ENCODE measurements at regions of chr9 and their contacts with region 1.

Region 1: GRCh38 chr9:113876151-113876992 is at the start of gene ZNF618:
- DNase-seq: peak; percentile 29 to 33
- ATAC-seq: peak; percentile 70 to 88 (median 87)
- H3K4me3 ChIP-seq: peak within 1 kb of the TSS; percentile 90
- H3K4me3 Mint-ChIP-seq: peak within 1 kb of the TSS; percentile 99
- H3K27ac ChIP-seq: no peak within 1 kb of the TSS
- H3K27ac Mint-ChIP-seq: peak within 1 kb of the TSS; percentile 73 to 87
- H3K4me1 ChIP-seq: peaks cover 3% of the 10 kb centered on the region
- H3K4me1 Mint-ChIP-seq: peaks cover 13% of the 10 kb centered on the region in 2 donors
- H3K27me3 ChIP-seq: peaks cover 2% of the 10 kb centered on the region
- H3K27me3 Mint-ChIP-seq: peaks cover 0 to under 1% of the 10 kb centered on the region in 2 donors
- CTCF ChIP-seq: no peak
- total RNA-seq, gene ZNF618: 9.2 to 10.7 (median 10.0) TPM

Region 2: DNA sequence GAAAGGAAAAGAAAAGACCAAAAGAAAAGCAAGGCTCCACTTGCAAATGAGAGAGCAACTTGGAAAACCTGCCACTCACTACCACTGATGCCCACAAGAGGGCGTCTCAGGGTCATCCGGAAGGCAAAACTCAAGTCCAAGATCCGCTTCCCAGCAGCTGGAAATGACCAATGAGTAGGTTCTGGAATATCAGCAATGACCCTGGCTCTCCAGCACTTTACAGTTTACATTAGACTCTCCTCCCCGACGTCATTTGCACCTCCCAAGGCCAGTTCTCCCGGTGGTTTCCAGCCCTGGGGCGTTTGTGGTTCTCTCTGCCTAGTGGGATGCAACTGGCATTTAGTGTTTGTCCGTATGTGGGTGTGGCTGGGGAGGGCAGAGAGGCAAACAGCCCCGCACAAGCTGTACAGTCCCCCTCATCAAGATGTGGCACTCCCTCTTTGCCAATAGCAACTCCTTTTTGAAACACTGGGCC is 194.0 kb before region 1 on chr9:
- intact Hi-C with region 1: loop called (anchors 5 kb)
- DNase-seq: peak; percentile 48 to 62
- ATAC-seq: peak; percentile 38 to 54 (median 54)
- H3K4me3 ChIP-seq: no peak overlapping the region
- H3K4me3 Mint-ChIP-seq: no peak overlapping the region
- H3K27ac ChIP-seq: no peak overlapping the region
- H3K27ac Mint-ChIP-seq: peak overlapping the region in 1 of 2 donors; percentile 9
- H3K4me1 ChIP-seq: peaks cover 25% of the 10 kb centered on the region
- H3K4me1 Mint-ChIP-seq: peaks cover 28 to 48% of the 10 kb centered on the region in 2 donors
- H3K27me3 ChIP-seq: peaks cover 2% of the 10 kb centered on the region
- H3K27me3 Mint-ChIP-seq: peaks cover 11 to 18% of the 10 kb centered on the region in 2 donors
- CTCF ChIP-seq: peak; percentile 98

Region 3: GRCh38 chr9:113807173-113808061 is 69.0 kb before region 1 on chr9:
- intact Hi-C with region 1: loop called (anchors 2 kb)
- DNase-seq: peak; percentile 25 to 62
- ATAC-seq: peak; percentile 68 to 85 (median 70)
- H3K4me3 ChIP-seq: no peak overlapping the region
- H3K4me3 Mint-ChIP-seq: no peak overlapping the region
- H3K27ac ChIP-seq: no peak overlapping the region
- H3K27ac Mint-ChIP-seq: no peak overlapping the region
- H3K4me1 ChIP-seq: no peaks in the 10 kb centered on the region
- H3K4me1 Mint-ChIP-seq: peaks cover 0 to 6% of the 10 kb centered on the region in 2 donors
- H3K27me3 ChIP-seq: peaks cover 1% of the 10 kb centered on the region
- H3K27me3 Mint-ChIP-seq: peaks cover 1 to 2% of the 10 kb centered on the region in 2 donors
- CTCF ChIP-seq: peak; percentile 96

Region 4: GRCh38 chr9:114786251-114786650 is 909.9 kb after region 1 on chr9:
- intact Hi-C with region 1: no loop called
- DNase-seq: no peak
- ATAC-seq: no peak
- H3K4me3 ChIP-seq: no peak overlapping the region
- H3K4me3 Mint-ChIP-seq: no peak overlapping the region
- H3K27ac ChIP-seq: no peak overlapping the region
- H3K27ac Mint-ChIP-seq: no peak overlapping the region
- H3K4me1 ChIP-seq: peaks cover 3% of the 10 kb centered on the region
- H3K4me1 Mint-ChIP-seq: no peaks in the 10 kb centered on the region
- H3K27me3 ChIP-seq: no peaks in the 10 kb centered on the region
- H3K27me3 Mint-ChIP-seq: peaks cover 0 to 3% of the 10 kb centered on the region in 2 donors
- CTCF ChIP-seq: no peak

Measured in natural killer cell (primary cell).